Sigmoid colon (tissue), 7 donors: ENCODE measurements at regions of chr1 and their contacts with region 1.

Region 1: GRCh38 chr1:193104906-193105820 is at the start of gene GLRX2:
- DNase-seq: peak; percentile 93
- H3K4me3 ChIP-seq: peak within 1 kb of the TSS; percentile 74 to 96 (median 84)
- H3K27ac ChIP-seq: peak within 1 kb of the TSS; percentile 95 to 97 (median 96)
- H3K4me1 ChIP-seq: peaks cover 0 to 25% (median 15%) of the 10 kb centered on the region in 4 donors
- H3K27me3 ChIP-seq: no peaks in the 10 kb centered on the region
- CTCF ChIP-seq: peak in 1 of 4 experiments; percentile 5
- EP300 ChIP-seq: no peak
- POLR2A ChIP-seq: peak; percentile 53 to 63
- total RNA-seq, gene GLRX2: 4.2 to 9.2 (median 7.1) TPM

Region 2: GRCh38 chr1:192958871-192959270 is 146.3 kb before region 1 on chr1:
- intact Hi-C with region 1: no loop called
- DNase-seq: no peak
- H3K4me3 ChIP-seq: no peak overlapping the region
- H3K27ac ChIP-seq: no peak overlapping the region
- H3K4me1 ChIP-seq: no peaks in the 10 kb centered on the region
- H3K27me3 ChIP-seq: no peaks in the 10 kb centered on the region
- CTCF ChIP-seq: no peak
- EP300 ChIP-seq: no peak
- POLR2A ChIP-seq: no peak

Region 3: GRCh38 chr1:193059268-193060225 is 45.6 kb before region 1 on chr1 and contains the starts of genes RO60 and UCHL5:
- intact Hi-C with region 1: loop called (anchors 5 kb)
- DNase-seq: peak; percentile 99
- H3K4me3 ChIP-seq: peak within 1 kb of the TSS; percentile 77 to 97 (median 84)
- H3K27ac ChIP-seq: peak within 1 kb of the TSS; percentile 96 to 99 (median 99)
- H3K4me1 ChIP-seq: peaks cover 0 to 48% (median 36%) of the 10 kb centered on the region in 4 donors
- H3K27me3 ChIP-seq: no peaks in the 10 kb centered on the region
- CTCF ChIP-seq: no peak
- EP300 ChIP-seq: peak in 2 of 4 donors; percentile 55 to 80
- POLR2A ChIP-seq: peak; percentile 78
- total RNA-seq, gene RO60: 94.6 to 128 (median 111) TPM
- total RNA-seq, gene UCHL5: 24.6 to 47.6 (median 36.8) TPM